Heart left ventricle (tissue), 16 donors: ENCODE measurements at regions of chr1 and their contacts with region 1.

Region 1: DNA sequence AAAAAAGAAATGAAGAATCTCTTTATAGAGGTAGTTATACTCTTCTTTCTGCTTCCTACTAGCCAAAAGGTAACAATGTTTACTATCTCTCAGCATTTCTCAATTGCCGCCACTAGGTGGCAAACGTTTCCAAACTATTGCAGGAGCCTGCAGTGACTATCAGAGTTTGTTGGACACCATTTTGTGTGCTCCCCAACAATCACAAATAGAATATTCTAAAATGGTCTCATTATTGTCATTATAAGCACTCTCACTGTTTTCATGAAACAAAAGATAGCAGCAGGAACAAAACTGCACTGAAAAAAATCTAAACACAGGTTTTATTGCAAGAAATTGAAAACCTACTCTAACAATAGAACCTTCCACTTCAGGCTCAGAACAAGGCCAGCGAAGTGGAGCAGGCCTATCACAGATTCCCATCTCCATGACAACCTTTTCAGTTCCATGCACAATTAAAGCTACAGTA is 83.9 kb upstream of the PLPPR4 start:
- DNase-seq: peak in 4 of 5 donors; percentile 61 to 79 (median 72)
- ATAC-seq: peak; percentile 80 to 98 (median 92)
- H3K4me3 ChIP-seq: peak overlapping the region in 1 of 12 donors; percentile 19
- H3K27ac ChIP-seq: peak overlapping the region in 5 of 12 donors; percentile 4 to 43 (median 39)
- H3K4me1 ChIP-seq: peaks cover 0 to 9% (median 4%) of the 10 kb centered on the region in 12 donors
- H3K27me3 ChIP-seq: no peaks in the 10 kb centered on the region
- CTCF ChIP-seq: peak; percentile 72 to 95 (median 84)
- POLR2A ChIP-seq: no peak

Region 2: DNA sequence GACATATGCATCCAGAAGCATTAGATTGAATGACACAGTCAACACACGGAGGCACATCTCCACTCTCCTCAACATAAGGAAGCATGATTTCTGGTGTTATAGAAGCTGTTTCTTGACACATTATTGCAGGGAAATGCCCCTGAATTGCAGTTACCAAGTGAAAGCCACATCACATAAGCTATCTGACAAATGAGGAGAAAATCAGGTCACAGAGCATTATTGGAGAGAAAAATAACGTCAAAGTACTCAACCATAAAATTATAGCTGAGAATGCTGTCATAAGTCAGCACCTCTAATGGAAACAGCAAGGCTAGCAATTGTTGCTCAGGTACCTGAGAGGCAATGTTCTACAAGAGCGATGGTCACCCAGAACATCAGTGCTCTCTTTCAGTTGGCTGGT is 295.7 kb after region 1 on chr1:
- intact Hi-C with region 1: loop called in 9 of 10 experiments (anchors 1 to 5 kb)
- DNase-seq: no peak
- ATAC-seq: no peak
- H3K4me3 ChIP-seq: no peak overlapping the region
- H3K27ac ChIP-seq: no peak overlapping the region
- H3K4me1 ChIP-seq: no peaks in the 10 kb centered on the region
- H3K27me3 ChIP-seq: no peaks in the 10 kb centered on the region
- CTCF ChIP-seq: no peak
- POLR2A ChIP-seq: no peak

Region 3: DNA sequence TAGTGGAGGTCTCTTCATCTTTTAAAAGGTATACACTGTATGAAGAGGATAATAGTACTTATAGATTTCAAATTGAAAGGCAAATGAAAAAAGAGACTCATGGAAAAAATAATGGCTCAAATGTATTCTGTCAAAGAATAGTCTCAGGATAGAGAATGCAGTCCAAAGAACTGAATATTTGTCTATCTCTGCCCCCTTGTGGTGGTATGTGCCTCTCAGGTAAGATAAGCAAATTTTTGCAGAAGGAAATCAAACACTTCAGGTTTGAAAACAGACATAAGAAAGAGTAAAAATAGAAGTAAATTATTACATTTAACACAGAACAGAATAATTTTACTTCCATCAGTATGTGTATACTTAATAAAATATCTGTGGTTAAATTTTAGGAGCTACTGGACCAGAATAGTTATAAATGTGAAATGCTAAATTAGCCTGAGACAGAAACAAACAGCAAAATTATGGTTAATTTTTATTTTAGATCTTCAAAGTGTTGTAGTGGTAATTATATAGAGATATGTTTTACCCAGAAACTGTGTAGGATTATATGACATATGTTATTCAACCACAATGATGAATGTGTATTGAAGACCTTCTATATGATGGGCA is 301.1 kb after region 1 on chr1:
- intact Hi-C with region 1: loop called (anchors 1 to 5 kb)
- DNase-seq: peak in 3 of 5 donors; percentile 27 to 56 (median 38)
- ATAC-seq: peak in 2 of 4 donors; percentile 66 to 81
- H3K4me3 ChIP-seq: no peak overlapping the region
- H3K27ac ChIP-seq: no peak overlapping the region
- H3K4me1 ChIP-seq: peaks cover 0 to 3% (median 0%) of the 10 kb centered on the region in 12 donors
- H3K27me3 ChIP-seq: no peaks in the 10 kb centered on the region
- CTCF ChIP-seq: peak; percentile 63 to 88 (median 80)
- POLR2A ChIP-seq: no peak

Region 4: DNA sequence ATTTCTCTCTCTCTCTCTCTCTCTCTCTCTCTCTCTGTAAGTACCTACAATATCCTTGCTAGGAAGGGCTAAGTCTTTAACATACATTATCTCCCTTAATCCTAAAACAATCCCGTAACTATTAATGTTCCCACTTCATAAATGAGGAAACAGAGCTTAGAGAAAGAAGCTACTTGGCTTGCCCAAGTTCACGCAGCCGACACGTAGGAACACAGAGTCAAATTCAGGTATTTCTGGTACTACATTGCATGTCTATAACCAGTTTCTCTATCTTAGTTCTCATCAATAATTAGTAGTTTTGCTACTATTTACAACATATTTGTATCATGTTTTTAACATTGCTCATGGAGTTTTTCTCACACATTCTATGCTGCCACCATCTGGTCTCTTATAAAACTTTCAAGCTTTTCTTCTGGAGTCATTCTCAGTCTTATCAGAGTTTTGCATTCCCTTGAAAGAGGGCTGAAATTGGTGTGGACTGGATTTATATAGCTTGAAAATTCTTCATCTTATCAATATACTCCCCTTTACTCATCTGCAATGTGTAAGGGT is 346.6 kb after region 1 on chr1:
- intact Hi-C with region 1: loop called in 4 of 10 experiments (anchors 5 kb)
- DNase-seq: no peak
- ATAC-seq: peak in 1 of 4 donors; percentile 42
- H3K4me3 ChIP-seq: no peak overlapping the region
- H3K27ac ChIP-seq: no peak overlapping the region
- H3K4me1 ChIP-seq: peaks cover 0 to 23% (median 3%) of the 10 kb centered on the region in 12 donors
- H3K27me3 ChIP-seq: no peaks in the 10 kb centered on the region
- CTCF ChIP-seq: peak in 11 of 12 donors; percentile 6 to 63 (median 42)
- POLR2A ChIP-seq: no peak

Region 5: DNA sequence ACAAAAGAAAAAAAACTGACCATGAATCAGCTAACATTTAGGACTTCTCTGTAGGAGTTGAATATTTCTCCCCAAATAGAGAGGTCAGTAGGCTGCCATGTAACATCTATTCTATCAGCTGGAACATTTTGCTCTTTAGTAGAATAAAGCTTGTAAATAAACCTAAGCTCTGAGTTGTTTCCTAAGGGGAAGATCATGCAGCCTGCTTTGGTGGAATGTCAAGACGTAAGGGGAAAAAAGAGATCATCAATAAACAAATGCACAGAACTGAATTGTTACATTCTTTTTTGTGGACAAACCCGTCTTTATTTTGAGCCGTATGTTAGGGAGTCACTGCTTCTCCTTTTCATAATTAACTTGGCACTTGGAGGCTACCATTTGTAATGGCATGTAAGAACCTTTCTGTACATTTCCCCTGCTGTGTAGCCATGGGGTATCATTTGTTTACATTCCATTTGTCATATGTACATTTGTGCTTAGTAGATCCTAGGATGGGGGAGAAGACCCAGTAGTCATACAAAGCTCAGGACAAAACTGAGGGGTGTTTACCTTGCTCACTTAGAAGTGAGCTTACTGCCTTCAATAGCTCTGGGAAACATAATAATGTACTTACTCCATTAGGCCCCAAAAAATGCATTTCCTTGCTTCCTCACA is 454.7 kb after region 1 on chr1:
- intact Hi-C with region 1: loop called in 1 of 10 experiments (anchors 10 kb)
- DNase-seq: no peak
- ATAC-seq: no peak
- H3K4me3 ChIP-seq: no peak overlapping the region
- H3K27ac ChIP-seq: peak overlapping the region in 4 of 12 donors; percentile 0 to 41 (median 10)
- H3K4me1 ChIP-seq: peaks cover 0 to 33% (median 13%) of the 10 kb centered on the region in 12 donors
- H3K27me3 ChIP-seq: no peaks in the 10 kb centered on the region
- CTCF ChIP-seq: no peak
- POLR2A ChIP-seq: no peak

Region 6: DNA sequence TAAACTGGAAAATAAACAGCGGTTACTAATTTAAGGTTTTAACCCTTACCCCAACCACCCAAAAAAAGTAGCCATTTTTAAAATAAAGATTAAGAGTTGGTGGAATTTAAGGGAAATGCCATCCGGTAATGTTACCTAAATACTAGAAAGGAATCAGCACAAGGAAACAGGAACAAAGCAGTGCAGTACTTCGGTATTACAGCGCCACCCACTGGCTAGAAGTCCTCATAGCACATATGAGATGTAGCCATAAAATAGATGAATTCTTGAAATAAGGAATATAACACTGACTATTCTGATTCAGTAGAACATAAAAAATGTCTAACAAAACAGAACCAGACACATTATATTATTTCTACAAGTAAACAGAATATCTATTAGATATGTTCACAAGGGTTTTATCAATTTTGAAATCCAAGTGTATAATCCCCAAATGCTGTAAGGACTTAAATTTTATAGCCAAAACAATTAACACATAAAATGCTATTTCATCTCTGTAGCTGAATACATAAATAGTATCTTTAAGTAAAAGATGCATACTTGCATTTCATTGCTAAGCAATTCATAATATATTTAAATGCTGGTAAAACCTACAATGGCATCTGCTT is 527.3 kb after region 1 on chr1:
- intact Hi-C with region 1: loop called (anchors 1 to 5 kb)
- DNase-seq: peak in 4 of 5 donors; percentile 57 to 76 (median 66)
- ATAC-seq: peak; percentile 58 to 86 (median 80)
- H3K4me3 ChIP-seq: no peak overlapping the region
- H3K27ac ChIP-seq: peak overlapping the region in 3 of 12 donors; percentile 24 to 34 (median 29)
- H3K4me1 ChIP-seq: peaks cover 0 to 14% (median 0%) of the 10 kb centered on the region in 12 donors
- H3K27me3 ChIP-seq: no peaks in the 10 kb centered on the region
- CTCF ChIP-seq: peak; percentile 81 to 96 (median 92)
- POLR2A ChIP-seq: no peak

Region 7: GRCh38 chr1:99737016-99737415 is 556.6 kb after region 1 on chr1:
- intact Hi-C with region 1: loop called in 1 of 10 experiments (anchors 10 kb)
- DNase-seq: peak in 2 of 5 donors; percentile 21 to 24
- ATAC-seq: peak; percentile 87 to 95 (median 90)
- H3K4me3 ChIP-seq: no peak overlapping the region
- H3K27ac ChIP-seq: peak overlapping the region in 1 of 12 donors; percentile 8
- H3K4me1 ChIP-seq: peaks cover 0 to 5% (median 0%) of the 10 kb centered on the region in 12 donors
- H3K27me3 ChIP-seq: no peaks in the 10 kb centered on the region
- CTCF ChIP-seq: peak; percentile 35 to 71 (median 56)
- POLR2A ChIP-seq: no peak